K562 (cell line): ENCODE measurements at regions of chr9 and their contacts with region 1.

Region 1: DNA sequence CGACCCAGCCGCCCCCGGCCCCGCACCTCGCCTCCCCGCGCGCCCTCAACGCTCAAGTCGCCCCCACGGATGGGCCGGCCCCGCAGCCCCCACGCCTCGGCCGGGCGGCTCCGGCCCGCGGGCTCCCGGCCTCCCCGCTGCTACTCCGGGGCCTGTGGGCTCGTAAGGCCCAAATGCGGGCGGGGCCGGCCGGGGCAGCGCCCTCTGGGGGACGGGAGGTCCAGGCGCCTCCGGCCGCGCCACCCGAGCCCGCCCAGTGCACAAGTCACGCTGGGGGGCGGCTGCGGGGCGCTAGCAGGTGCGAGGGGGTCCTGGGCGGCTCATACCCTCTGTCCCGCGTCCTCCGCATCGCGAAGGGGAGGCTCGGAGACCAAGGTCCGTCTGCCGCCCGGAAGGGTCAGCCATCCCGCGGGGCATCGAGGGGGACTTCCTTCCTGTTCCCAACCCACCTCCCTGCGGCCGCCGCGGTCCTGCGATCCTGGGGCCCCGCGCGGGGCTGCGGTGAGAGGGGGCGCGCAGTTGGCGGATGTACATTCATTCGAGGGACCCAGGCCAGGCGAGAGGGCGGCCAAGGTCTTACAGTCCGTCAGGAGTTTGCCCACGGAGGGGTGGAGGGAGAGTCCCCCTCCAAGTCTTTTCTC is at the start of gene CIZ1:
- DNase-seq: peak; percentile 96 to 99 (median 99)
- ATAC-seq: peak; percentile 96
- H3K4me3 ChIP-seq: peak within 1 kb of the TSS; percentile 92
- H3K27ac ChIP-seq: peak within 1 kb of the TSS; percentile 82
- H3K4me1 ChIP-seq: peaks cover 26 to 34% of the 10 kb centered on the region in 2 experiments
- H3K27me3 ChIP-seq: no peaks in the 10 kb centered on the region
- CTCF ChIP-seq: peak; percentile 87 to 97 (median 95)
- EP300 ChIP-seq: peak; percentile 59
- POLR2A ChIP-seq: no peak
- RAD21 ChIP-seq: peak; percentile 35 to 43
- polyA plus RNA-seq, gene CIZ1: 6.6 to 12.6 TPM

Region 2: DNA sequence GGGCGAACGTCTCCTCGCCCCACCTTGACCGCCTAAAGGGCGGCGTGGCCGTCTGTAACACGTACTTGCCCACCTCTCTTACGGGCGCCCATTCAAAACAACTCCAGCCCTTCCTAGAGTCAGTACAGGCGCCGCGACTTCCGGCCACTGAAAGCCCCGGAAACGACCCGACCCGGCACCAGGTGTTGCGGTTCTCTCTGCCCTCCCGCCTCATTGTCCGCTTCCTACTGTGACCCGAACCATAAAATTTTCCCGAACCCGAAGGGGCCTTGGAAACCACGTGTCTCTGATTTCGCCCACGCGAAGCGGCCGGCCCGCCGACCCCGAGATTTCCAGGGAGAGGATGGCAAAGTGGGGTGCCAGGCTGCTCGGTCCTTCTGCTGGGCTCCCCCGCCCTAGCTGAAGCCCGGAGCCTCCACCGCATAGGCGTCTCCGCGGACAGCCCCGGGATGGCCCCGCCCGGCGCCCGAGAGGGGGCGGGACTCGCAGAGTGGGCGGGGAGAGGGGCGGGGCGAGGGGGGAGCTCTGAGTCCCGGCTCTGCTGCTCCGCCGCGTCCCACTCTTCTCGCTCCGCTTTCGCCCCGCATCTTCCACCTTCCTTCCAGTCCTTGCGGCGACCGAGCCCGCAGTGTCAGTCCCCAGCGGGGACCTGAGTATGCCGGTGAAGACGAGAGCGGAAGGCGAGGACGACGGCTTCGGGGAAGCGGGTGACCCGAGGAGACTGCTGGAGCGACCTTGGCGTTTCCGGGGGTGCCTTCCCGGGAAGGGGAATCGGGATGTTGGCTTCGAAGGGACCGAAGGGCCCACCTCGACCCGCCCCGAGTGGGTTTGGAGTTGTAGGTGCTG is 63.3 kb before region 1 on chr9:
- CTCF ChIA-PET with region 1: no interaction called
- POLR2A ChIA-PET with region 1: no interaction called
- in situ Hi-C with region 1: no loop called
- intact Hi-C with region 1: loop called (anchors 10 kb)
- DNase-seq: peak; percentile 89 to 93 (median 90)
- ATAC-seq: peak; percentile 82
- H3K4me3 ChIP-seq: peak overlapping the region; percentile 98
- H3K27ac ChIP-seq: peak overlapping the region; percentile 93
- H3K4me1 ChIP-seq: peaks cover 10 to 38% of the 10 kb centered on the region in 2 experiments
- H3K27me3 ChIP-seq: no peaks in the 10 kb centered on the region
- CTCF ChIP-seq: no peak
- EP300 ChIP-seq: no peak
- POLR2A ChIP-seq: peak; percentile 71; the same call in 1 of the 2 replicates
- RAD21 ChIP-seq: no peak

Region 3: GRCh38 chr9:128168731-128169308 is 22.7 kb before region 1 on chr9:
- CTCF ChIA-PET with region 1: no interaction called
- POLR2A ChIA-PET with region 1: interaction called, 78 read pairs
- in situ Hi-C with region 1: no loop called
- intact Hi-C with region 1: no loop called
- DNase-seq: no peak
- ATAC-seq: no peak
- H3K4me3 ChIP-seq: no peak overlapping the region
- H3K27ac ChIP-seq: no peak overlapping the region
- H3K4me1 ChIP-seq: peaks cover 0 to 16% of the 10 kb centered on the region in 2 experiments; a peak in 3 of 5 replicates
- H3K27me3 ChIP-seq: no peaks in the 10 kb centered on the region
- CTCF ChIP-seq: no peak
- EP300 ChIP-seq: no peak
- POLR2A ChIP-seq: no peak
- RAD21 ChIP-seq: no peak

Region 4: GRCh38 chr9:128175102-128175563 is 16.4 kb before region 1 on chr9:
- CTCF ChIA-PET with region 1: no interaction called
- POLR2A ChIA-PET with region 1: interaction called, 78 read pairs
- in situ Hi-C with region 1: no loop called
- intact Hi-C with region 1: no loop called
- DNase-seq: no peak
- ATAC-seq: no peak
- H3K4me3 ChIP-seq: no peak overlapping the region
- H3K27ac ChIP-seq: peak overlapping the region; percentile 5; the same call in 1 of the 3 replicates
- H3K4me1 ChIP-seq: peaks cover 0 to 24% of the 10 kb centered on the region in 2 experiments; a peak in 3 of 5 replicates
- H3K27me3 ChIP-seq: no peaks in the 10 kb centered on the region
- CTCF ChIP-seq: no peak
- EP300 ChIP-seq: no peak
- POLR2A ChIP-seq: no peak
- RAD21 ChIP-seq: no peak

Region 5: DNA sequence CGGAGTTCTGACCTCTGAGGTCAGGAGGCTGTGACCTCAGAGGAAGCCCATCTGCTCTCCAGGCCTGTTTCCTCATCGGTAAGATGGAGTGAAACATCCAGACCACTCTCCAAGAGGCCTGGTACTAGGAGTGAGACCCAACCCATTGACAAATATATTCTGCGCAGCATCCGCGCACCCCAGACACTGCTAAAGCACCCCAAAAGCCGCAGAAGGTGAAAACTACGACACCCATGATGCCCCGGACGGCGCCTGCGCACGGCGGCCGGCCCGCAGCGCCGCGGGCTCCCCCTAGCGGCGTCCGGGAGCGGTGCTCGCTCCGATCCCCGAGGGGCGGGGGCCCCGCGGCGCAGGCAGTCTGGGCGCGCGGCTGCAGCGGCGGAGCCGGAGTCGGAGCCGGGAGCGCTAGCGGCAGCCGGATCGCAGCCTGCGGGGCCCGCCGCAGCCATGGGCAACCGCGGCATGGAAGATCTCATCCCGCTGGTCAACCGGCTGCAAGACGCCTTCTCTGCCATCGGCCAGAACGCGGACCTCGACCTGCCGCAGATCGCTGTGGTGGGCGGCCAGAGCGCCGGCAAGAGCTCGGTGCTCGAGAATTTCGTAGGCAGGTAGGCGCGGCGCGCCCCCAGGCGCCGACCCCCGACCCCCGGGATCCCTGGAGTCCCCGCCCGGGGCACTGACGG is 11.6 kb after region 1 on chr9 and contains the start of gene DNM1:
- CTCF ChIA-PET with region 1: interaction called, 4 read pairs
- POLR2A ChIA-PET with region 1: interaction called, 10 read pairs
- in situ Hi-C with region 1: no loop called
- intact Hi-C with region 1: loop called (anchors 2 kb)
- DNase-seq: peak; percentile 91 to 100 (median 100)
- ATAC-seq: peak; percentile 92
- H3K4me3 ChIP-seq: peak within 1 kb of the TSS; percentile 55
- H3K27ac ChIP-seq: peak within 1 kb of the TSS; percentile 20; the same call in 2 of the 3 replicates
- H3K4me1 ChIP-seq: peaks cover 19 to 36% of the 10 kb centered on the region in 2 experiments
- H3K27me3 ChIP-seq: no peaks in the 10 kb centered on the region
- CTCF ChIP-seq: peak; percentile 96 to 99 (median 97)
- EP300 ChIP-seq: peak; percentile 45
- POLR2A ChIP-seq: no peak
- RAD21 ChIP-seq: peak; percentile 46 to 67
- polyA plus RNA-seq, gene DNM1: 0.39 to 0.58 TPM

Region 6: GRCh38 chr9:128244837-128245231 is 53.3 kb after region 1 on chr9:
- CTCF ChIA-PET with region 1: no interaction called
- POLR2A ChIA-PET with region 1: interaction called, 5 read pairs
- in situ Hi-C with region 1: no loop called
- intact Hi-C with region 1: loop called (anchors 1 kb)
- DNase-seq: peak; percentile 76 to 96 (median 88)
- ATAC-seq: peak; percentile 64
- H3K4me3 ChIP-seq: no peak overlapping the region
- H3K27ac ChIP-seq: peak overlapping the region; percentile 43; the same call in 1 of the 3 replicates
- H3K4me1 ChIP-seq: peaks cover 28 to 53% of the 10 kb centered on the region in 2 experiments
- H3K27me3 ChIP-seq: no peaks in the 10 kb centered on the region
- CTCF ChIP-seq: no peak
- EP300 ChIP-seq: no peak
- POLR2A ChIP-seq: no peak
- RAD21 ChIP-seq: no peak